CD14-positive monocyte (primary cell): ENCODE measurements at regions of chr1 and their contacts with region 1.

Region 1: DNA sequence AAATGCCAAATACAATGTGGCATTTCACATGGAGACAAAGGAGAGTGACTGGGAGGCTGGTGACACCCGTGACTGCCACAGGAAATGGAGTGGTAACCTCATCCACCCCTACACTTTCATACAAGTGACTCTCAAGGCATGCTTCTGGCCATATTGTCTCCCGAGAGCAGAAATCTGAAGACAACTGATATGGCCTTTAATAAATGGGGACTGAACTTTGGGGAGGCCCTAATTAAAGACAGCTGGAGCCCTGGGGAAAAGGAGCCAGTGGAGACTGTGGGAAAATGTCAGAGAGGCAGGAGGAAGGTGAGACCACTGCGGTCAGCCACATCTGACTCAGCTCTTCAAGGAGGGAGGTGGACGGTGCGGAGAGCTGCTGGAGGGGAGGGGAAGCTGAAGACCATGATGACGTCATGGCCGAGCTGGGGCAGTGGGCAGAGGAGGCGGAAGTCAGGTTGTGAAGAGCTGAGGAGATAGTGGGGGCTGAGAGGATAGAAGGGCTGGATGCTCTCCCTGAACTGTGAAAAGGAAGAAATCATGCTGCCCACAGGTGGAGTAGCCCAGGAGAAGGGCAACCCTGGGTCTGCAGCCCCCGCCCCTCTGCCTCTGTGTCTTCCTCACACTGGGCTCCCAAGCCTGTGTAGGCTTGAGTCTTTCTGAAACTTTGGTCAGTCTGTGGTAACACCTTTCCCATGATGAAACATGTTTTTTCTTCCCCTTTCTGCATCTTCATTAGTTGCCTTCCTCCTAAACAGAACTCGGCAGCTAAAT is 14.0 kb upstream of the NCF2 start:
- DNase-seq: peak; percentile 96 to 99 (median 96)
- H3K4me3 ChIP-seq: peak overlapping the region in 2 of 3 experiments; percentile 3 to 62
- H3K4me3 Mint-ChIP-seq: peak overlapping the region; percentile 53 to 76
- H3K27ac ChIP-seq: peak overlapping the region; percentile 92 to 98
- H3K27ac Mint-ChIP-seq: peak overlapping the region; percentile 99 to 100 (median 100)
- H3K4me1 ChIP-seq: peaks cover 96 to 100% of the 10 kb centered on the region in 2 donors
- H3K4me1 Mint-ChIP-seq: peaks cover 92% of the 10 kb centered on the region
- H3K27me3 ChIP-seq: no peaks in the 10 kb centered on the region
- H3K27me3 Mint-ChIP-seq: no peaks in the 10 kb centered on the region
- CTCF ChIP-seq: no peak

Region 2: DNA sequence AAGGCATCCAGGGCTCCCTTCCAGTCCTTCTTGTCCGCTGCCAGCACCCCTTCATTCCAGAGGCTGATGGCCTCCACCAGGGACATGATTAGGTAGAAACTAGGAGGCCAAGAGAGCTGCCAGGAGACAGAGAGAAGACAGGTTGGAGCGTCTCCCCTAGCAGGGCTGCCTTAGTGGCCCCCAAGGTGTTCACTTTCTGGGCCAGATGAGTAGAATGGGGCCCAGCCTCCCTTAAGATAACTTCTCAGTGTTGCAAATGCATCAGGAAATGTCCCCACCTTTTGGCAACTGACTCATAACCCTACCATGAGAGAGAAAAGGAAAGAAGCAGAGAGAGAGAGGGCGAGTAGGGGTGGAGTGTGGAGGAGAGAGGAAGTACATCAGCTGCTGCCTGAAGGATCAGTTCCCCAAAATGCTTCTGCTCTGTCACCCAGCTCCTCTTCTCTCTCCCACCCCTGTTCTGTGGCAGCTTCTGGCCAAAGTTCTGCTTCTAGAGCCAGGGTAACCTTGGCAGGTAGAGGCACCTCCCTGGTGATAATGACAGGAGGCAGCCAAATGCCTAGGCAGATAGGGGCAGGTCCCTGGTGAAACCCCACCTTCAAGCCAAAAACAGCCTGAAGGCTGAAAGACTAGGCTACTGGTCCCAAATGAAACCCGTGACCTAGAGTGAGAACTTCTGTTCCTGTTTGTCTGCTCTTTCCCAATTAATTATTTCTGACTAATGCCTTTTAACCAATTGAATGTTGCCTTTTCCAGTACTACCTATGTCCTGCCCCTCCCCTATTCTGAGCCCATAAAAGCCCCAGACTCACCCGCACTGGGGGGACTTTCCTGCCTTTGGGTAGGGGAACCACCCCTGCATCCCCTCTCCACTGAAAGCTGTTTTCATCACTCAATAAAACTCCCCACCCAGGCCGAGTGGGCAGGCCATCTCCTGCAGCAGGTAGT is 13.7 kb before region 1 on chr1 and contains the start of gene NCF2:
- intact Hi-C with region 1: loop called (anchors 1 to 2 kb)
- DNase-seq: peak; percentile 96 to 99 (median 98)
- H3K4me3 ChIP-seq: peak within 1 kb of the TSS; percentile 69 to 99 (median 91)
- H3K4me3 Mint-ChIP-seq: peak within 1 kb of the TSS; percentile 95 to 98
- H3K27ac ChIP-seq: peak within 1 kb of the TSS; percentile 95 to 98
- H3K27ac Mint-ChIP-seq: peak within 1 kb of the TSS; percentile 97 to 100 (median 98)
- H3K4me1 ChIP-seq: peaks cover 80 to 93% of the 10 kb centered on the region in 2 donors
- H3K4me1 Mint-ChIP-seq: peaks cover 72% of the 10 kb centered on the region
- H3K27me3 ChIP-seq: no peaks in the 10 kb centered on the region
- H3K27me3 Mint-ChIP-seq: peaks cover 0 to 4% (median 0%) of the 10 kb centered on the region in 3 donors
- CTCF ChIP-seq: no peak
- polyA plus RNA-seq, gene NCF2: 509 to 697 (median 557) TPM